HepG2 (cell line): ENCODE measurements at regions of chr3 and their contacts with region 1.

Region 1: GRCh38 chr3:159252772-159253384 is 451.0 kb downstream of the MFSD1 start:
- DNase-seq: peak; percentile 10
- ATAC-seq: no peak
- H3K4me3 ChIP-seq: no peak overlapping the region
- H3K27ac ChIP-seq: no peak overlapping the region
- H3K4me1 ChIP-seq: no peaks in the 10 kb centered on the region
- H3K27me3 ChIP-seq: no peaks in the 10 kb centered on the region
- CTCF ChIP-seq: peak; percentile 51
- EP300 ChIP-seq: no peak
- POLR2A ChIP-seq: no peak
- RAD21 ChIP-seq: no peak

Region 2: DNA sequence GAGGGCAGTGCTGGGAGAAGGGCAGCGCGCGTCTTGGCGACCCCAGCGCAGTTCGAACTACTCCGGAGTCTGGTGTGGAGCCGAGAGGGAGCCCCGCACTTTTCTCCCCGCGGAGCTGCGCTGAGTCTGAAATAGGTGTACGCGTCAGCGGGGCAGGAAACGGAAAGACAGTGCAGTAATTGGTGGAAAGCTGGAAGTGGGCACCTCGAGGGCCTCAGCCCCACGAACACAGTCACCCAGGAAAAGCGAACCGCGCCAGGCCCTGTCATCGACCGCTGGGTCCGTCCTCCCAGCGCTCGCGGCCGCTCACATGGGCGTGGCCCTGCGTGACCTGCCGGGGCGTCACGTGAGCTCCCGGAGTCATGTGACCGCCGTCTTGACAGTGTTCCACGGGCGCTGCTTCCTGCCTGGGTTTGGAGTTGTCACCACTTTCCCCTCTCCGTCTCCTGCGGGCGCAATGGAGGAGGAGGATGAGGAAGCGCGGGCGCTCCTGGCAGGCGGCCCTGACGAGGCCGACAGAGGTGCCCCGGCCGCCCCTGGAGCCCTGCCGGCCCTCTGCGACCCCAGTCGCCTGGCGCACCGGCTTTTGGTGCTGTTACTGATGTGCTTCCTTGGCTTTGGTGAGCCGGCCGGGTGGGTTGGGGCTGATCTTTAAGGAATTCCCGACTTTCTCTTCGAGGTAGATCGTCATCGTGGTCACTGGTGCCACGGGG is 451.0 kb before region 1 on chr3 and contains the start of gene MFSD1:
- CTCF ChIA-PET with region 1: no interaction called
- POLR2A ChIA-PET with region 1: no interaction called
- in situ Hi-C with region 1: no loop called
- intact Hi-C with region 1: loop called (anchors 2 kb)
- DNase-seq: peak; percentile 80
- ATAC-seq: peak; percentile 96
- H3K4me3 ChIP-seq: peak within 1 kb of the TSS; percentile 67 to 92 (median 84)
- H3K27ac ChIP-seq: peak within 1 kb of the TSS; percentile 43
- H3K4me1 ChIP-seq: peaks cover 23% of the 10 kb centered on the region
- H3K27me3 ChIP-seq: no peaks in the 10 kb centered on the region
- CTCF ChIP-seq: no peak; the same call in 1 of the 2 replicates
- EP300 ChIP-seq: no peak
- POLR2A ChIP-seq: peak; percentile 72 to 88
- RAD21 ChIP-seq: peak; percentile 23; the same call in 1 of the 2 replicates
- total RNA-seq, gene MFSD1: 22.2 and 37.9 TPM in 2 replicates

Region 3: GRCh38 chr3:158918008-158918407 is 334.9 kb before region 1 on chr3:
- CTCF ChIA-PET with region 1: no interaction called
- POLR2A ChIA-PET with region 1: no interaction called
- in situ Hi-C with region 1: no loop called
- intact Hi-C with region 1: loop called (anchors 2 kb)
- DNase-seq: peak; percentile 45
- ATAC-seq: peak; percentile 99
- H3K4me3 ChIP-seq: no peak overlapping the region
- H3K27ac ChIP-seq: no peak overlapping the region
- H3K4me1 ChIP-seq: no peaks in the 10 kb centered on the region
- H3K27me3 ChIP-seq: no peaks in the 10 kb centered on the region
- CTCF ChIP-seq: peak; percentile 68
- EP300 ChIP-seq: no peak
- POLR2A ChIP-seq: no peak
- RAD21 ChIP-seq: no peak

Region 4: GRCh38 chr3:159130108-159130507 is 122.8 kb before region 1 on chr3:
- CTCF ChIA-PET with region 1: no interaction called
- POLR2A ChIA-PET with region 1: no interaction called
- in situ Hi-C with region 1: loop called (anchors 10 kb)
- intact Hi-C with region 1: loop called (anchors 2 kb)
- DNase-seq: peak; percentile 13
- ATAC-seq: no peak
- H3K4me3 ChIP-seq: no peak overlapping the region
- H3K27ac ChIP-seq: no peak overlapping the region
- H3K4me1 ChIP-seq: no peaks in the 10 kb centered on the region
- H3K27me3 ChIP-seq: no peaks in the 10 kb centered on the region
- CTCF ChIP-seq: peak; percentile 53
- EP300 ChIP-seq: no peak
- POLR2A ChIP-seq: no peak
- RAD21 ChIP-seq: no peak

Region 5: DNA sequence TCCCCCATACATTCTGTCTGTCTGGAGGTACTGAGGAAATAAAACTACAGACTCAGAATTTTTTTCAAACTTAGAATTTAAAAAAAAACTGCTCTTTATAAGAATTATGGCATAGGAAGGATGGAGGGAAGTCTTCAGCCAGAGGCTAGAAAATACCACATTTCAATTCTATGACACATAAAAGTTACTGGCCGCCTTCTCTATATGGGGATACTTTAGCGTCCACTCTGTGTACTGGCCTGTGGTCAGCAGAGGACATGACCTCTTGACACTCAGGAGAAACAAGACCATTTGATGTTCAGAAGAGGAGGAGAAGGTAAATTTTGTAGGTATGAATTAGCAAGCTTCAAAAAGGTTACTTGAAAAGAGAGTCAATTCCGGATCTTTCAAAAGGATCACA is 33.6 kb before region 1 on chr3:
- CTCF ChIA-PET with region 1: no interaction called
- POLR2A ChIA-PET with region 1: no interaction called
- in situ Hi-C with region 1: no loop called
- intact Hi-C with region 1: no loop called
- DNase-seq: no peak
- ATAC-seq: no peak
- H3K4me3 ChIP-seq: no peak overlapping the region
- H3K27ac ChIP-seq: no peak overlapping the region
- H3K4me1 ChIP-seq: no peaks in the 10 kb centered on the region
- H3K27me3 ChIP-seq: no peaks in the 10 kb centered on the region
- CTCF ChIP-seq: no peak
- EP300 ChIP-seq: no peak
- POLR2A ChIP-seq: no peak
- RAD21 ChIP-seq: no peak

Region 6: DNA sequence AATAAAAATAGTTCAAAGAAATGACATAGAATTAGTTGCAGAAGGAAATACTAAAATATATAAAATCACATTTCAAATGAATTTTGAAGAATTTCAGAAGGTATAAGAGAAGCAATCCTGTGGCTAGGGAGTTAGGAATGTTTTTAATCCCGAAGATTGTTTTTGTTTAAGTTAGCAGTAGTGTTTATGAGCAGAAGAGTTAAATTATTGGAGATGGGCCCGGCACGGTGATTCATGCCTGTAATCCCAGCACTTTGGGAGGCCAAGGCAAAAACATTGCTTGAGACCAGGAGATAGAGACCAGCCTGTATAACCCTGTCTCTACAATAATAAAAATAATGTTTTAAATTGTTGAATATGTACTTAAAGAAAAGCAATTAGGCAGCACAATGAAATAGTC is 18.6 kb before region 1 on chr3:
- CTCF ChIA-PET with region 1: no interaction called
- POLR2A ChIA-PET with region 1: no interaction called
- in situ Hi-C with region 1: no loop called
- intact Hi-C with region 1: no loop called
- DNase-seq: no peak
- ATAC-seq: no peak
- H3K4me3 ChIP-seq: no peak overlapping the region
- H3K27ac ChIP-seq: no peak overlapping the region
- H3K4me1 ChIP-seq: no peaks in the 10 kb centered on the region
- H3K27me3 ChIP-seq: no peaks in the 10 kb centered on the region
- CTCF ChIP-seq: no peak
- EP300 ChIP-seq: no peak
- POLR2A ChIP-seq: no peak
- RAD21 ChIP-seq: no peak